H1 (cell line): ENCODE measurements at regions of chr10 and their contacts with region 1.

Region 1: DNA sequence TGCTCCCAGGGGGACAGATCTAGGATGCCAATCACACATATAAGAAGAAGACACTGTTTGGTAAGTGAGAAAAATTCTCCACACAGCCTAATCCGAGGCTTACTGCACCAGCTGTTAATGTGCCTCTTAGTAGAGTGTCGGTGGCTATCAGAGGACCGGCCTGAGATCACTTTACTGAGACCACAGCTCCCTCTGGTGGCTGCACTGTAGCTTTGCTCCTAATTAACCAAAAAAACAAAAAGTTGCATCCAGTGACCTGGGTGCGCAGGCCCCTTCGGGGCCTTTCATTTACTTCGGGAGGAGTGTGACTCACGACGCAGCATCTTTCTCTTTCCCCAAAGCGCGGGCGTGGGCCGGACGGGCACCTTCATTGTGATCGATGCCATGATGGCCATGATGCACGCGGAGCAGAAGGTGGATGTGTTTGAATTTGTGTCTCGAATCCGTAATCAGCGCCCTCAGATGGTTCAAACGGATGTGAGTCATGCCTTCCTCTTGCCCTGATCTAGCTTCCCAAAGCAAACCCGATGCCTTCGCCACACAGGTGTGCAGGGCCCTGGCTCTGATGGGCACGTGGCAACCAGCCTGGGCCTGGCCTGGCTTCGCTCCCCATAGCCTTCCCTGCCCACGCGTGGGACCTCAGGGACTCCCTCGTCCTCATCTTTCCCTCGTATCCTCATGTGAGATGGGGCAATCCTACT is 56.7 kb downstream of the MKI67 start:
- DNase-seq: peak; percentile 19 to 86
- H3K4me3 ChIP-seq: no peak overlapping the region
- H3K27ac ChIP-seq: no peak overlapping the region
- H3K4me1 ChIP-seq: peaks cover 0 to 3% (median 0%) of the 10 kb centered on the region in 4 experiments; a peak in 1 of 7 replicates
- H3K27me3 ChIP-seq: 0 out of 7 replicates have a peak, but pooled peaks cover 0 to 2% (median 0%) of the 10 kb centered on the region in 4 experiments
- CTCF ChIP-seq: peak; percentile 55 to 88 (median 74)
- EP300 ChIP-seq: 0 out of 3 replicates have a peak, but pooled peaks of 1 of the 2 experiments have one; percentile 16
- POLR2A ChIP-seq: no peak
- RAD21 ChIP-seq: peak; percentile 92 to 95

Region 2: DNA sequence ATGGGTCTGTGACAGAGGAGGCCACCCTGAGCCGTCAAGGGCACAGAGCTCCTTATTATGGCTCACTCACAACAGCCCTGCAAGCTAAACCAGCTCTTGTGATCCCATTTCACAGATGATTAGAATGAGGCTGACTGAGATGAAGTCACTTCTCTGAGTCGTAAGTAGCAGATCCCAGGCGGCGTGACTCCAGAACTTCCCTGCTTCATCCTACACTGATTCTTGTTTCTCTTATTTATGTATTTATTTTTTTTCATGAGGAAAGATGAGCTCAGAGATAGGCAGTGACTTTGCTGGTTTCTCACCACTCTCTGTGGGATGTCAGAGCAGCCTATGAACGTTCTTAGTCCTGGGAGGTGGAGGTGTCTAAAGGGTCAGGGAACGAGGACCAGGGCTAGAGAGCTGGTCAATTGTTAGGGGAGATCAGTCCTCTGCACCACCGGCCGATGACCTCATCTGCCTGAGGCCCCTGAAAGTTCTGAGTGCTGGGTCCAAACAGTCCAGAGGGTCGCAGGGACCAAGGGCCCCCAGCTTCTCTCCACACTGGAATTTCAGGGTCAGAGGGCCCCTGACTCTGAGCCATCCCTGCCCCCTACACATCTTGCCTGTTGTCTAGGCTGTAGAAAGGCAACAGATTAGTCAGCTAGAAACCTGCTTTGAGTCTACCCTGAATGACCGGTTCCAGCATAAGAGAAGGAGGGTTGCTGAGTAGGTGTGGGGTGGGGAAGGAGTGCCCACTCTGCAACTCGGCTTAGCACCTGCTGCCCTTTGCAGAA is 194.6 kb before region 1 on chr10:
- CTCF ChIA-PET with region 1: interaction called, 12 read pairs
- POLR2A ChIA-PET with region 1: no interaction called
- DNase-seq: no peak
- H3K4me3 ChIP-seq: no peak overlapping the region
- H3K27ac ChIP-seq: no peak overlapping the region
- H3K4me1 ChIP-seq: no peaks in the 10 kb centered on the region
- H3K27me3 ChIP-seq: no peaks in the 10 kb centered on the region; a peak in 1 of 7 replicates
- CTCF ChIP-seq: no peak
- EP300 ChIP-seq: no peak
- POLR2A ChIP-seq: no peak
- RAD21 ChIP-seq: no peak

Region 3: DNA sequence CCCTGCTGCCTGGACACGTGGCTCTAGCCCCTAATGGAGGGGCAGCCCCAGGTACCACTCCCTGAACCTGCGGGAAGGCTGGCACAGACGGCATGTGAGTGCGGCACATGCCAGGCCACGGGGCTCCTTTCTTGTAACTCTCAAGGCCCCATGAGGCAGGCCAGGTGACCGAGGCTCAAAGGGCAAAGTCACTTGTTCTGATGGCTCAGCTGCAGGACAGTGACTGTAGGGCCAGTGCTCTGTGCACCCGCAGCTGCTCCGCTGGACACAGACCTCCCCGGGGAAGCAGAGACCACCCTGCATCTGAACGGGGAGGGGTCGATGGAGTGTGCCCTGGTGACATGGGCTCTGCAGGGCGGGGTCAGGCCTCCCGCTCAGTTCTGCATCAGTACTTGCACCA is 107.3 kb before region 1 on chr10:
- CTCF ChIA-PET with region 1: no interaction called
- POLR2A ChIA-PET with region 1: no interaction called
- DNase-seq: no peak
- H3K4me3 ChIP-seq: no peak overlapping the region
- H3K27ac ChIP-seq: no peak overlapping the region
- H3K4me1 ChIP-seq: peaks cover 2 to 20% (median 7%) of the 10 kb centered on the region in 4 experiments
- H3K27me3 ChIP-seq: no peaks in the 10 kb centered on the region; a peak in 2 of 7 replicates
- CTCF ChIP-seq: no peak
- EP300 ChIP-seq: no peak
- POLR2A ChIP-seq: no peak
- RAD21 ChIP-seq: no peak

Region 4: DNA sequence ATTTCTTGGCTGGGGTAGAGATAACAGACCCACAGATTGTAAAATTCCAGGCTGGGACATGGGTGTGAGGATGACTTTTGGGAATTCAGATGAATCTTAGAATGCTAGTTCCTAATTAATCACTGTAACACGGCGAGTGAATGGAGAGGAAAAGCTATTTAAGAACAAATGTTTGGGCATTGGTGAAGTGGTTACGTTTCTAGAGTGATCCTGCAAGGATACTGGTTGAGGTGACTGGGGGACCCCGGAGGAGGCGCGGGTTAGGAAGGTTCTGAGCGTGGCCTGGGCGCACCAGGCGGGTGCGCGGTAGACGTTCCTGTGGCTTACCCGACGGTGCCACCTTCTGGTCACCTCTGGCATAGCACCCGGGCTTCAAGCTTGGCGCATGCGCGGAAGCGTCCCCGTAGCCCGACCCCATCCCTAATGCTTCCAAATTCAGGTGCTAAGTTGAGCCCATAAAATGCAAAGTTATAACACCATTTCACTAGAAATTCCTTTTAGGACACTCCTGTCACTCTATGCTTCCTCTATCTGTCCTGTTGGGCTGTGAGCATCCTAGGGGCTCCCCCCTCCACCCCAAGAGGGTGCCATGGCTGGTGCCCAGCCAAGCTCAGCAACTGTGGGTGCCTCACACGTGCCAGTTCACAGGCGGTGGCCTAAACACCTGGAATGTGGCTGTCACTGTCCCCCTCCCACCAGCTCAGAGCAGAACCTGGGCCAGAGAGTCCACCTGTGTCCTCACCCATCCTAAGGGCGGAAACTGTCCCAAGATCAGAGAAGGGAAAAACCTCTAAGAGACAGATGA is 58.1 kb before region 1 on chr10:
- CTCF ChIA-PET with region 1: interaction called, 18 read pairs
- POLR2A ChIA-PET with region 1: no interaction called
- DNase-seq: peak; percentile 47 to 98
- H3K4me3 ChIP-seq: no peak overlapping the region; a peak in 1 of 8 replicates
- H3K27ac ChIP-seq: no peak overlapping the region
- H3K4me1 ChIP-seq: peaks cover 0 to 4% (median 0%) of the 10 kb centered on the region in 4 experiments; a peak in 1 of 7 replicates
- H3K27me3 ChIP-seq: no peaks in the 10 kb centered on the region; a peak in 1 of 7 replicates
- CTCF ChIP-seq: peak; percentile 94 to 98 (median 98)
- EP300 ChIP-seq: no peak
- POLR2A ChIP-seq: no peak
- RAD21 ChIP-seq: peak; percentile 94 to 95

Region 5: GRCh38 chr10:128026614-128027300 is 42.7 kb before region 1 on chr10:
- CTCF ChIA-PET with region 1: interaction called, 28 read pairs
- POLR2A ChIA-PET with region 1: no interaction called
- DNase-seq: no peak
- H3K4me3 ChIP-seq: no peak overlapping the region
- H3K27ac ChIP-seq: no peak overlapping the region
- H3K4me1 ChIP-seq: no peaks in the 10 kb centered on the region; a peak in 1 of 7 replicates
- H3K27me3 ChIP-seq: no peaks in the 10 kb centered on the region
- CTCF ChIP-seq: no peak
- EP300 ChIP-seq: no peak
- POLR2A ChIP-seq: no peak
- RAD21 ChIP-seq: no peak

Region 6: DNA sequence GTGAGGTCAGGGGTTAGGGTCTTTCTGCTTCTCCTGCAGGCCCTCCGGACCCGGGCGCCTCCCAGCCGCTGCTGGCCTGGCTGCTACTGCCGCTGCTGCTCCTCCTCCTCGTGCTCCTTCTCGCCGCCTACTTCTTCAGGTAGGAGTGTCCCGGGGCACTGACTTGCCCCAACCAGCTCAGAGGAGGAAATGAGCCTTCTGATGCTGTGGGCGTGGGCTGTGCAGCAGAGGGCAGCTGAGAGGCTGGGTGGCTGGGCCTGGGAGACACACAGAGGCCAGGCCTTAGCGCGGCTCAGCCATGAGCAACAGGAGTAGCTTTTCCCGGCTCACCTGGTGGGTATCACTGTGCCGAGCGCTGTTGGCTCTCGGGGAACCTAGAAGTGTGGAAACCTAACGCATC is 22.1 kb before region 1 on chr10:
- CTCF ChIA-PET with region 1: interaction called, 24 read pairs
- POLR2A ChIA-PET with region 1: no interaction called
- DNase-seq: peak; percentile 15 to 71
- H3K4me3 ChIP-seq: no peak overlapping the region
- H3K27ac ChIP-seq: no peak overlapping the region
- H3K4me1 ChIP-seq: peaks cover 0 to 2% (median 0%) of the 10 kb centered on the region in 4 experiments; a peak in 2 of 7 replicates
- H3K27me3 ChIP-seq: no peaks in the 10 kb centered on the region
- CTCF ChIP-seq: no peak
- EP300 ChIP-seq: no peak; a peak in 1 of 3 replicates
- POLR2A ChIP-seq: peak in 1 of 2 experiments; percentile 40; a peak in 1 of 3 replicates
- RAD21 ChIP-seq: no peak

Region 7: GRCh38 chr10:128095027-128095752 is 25.7 kb after region 1 on chr10:
- CTCF ChIA-PET with region 1: interaction called, 14 read pairs
- POLR2A ChIA-PET with region 1: no interaction called
- DNase-seq: no peak
- H3K4me3 ChIP-seq: no peak overlapping the region
- H3K27ac ChIP-seq: no peak overlapping the region
- H3K4me1 ChIP-seq: 0 out of 7 replicates have a peak, but pooled peaks cover 0 to 3% (median under 1%) of the 10 kb centered on the region in 4 experiments
- H3K27me3 ChIP-seq: no peaks in the 10 kb centered on the region
- CTCF ChIP-seq: no peak
- EP300 ChIP-seq: no peak
- POLR2A ChIP-seq: no peak
- RAD21 ChIP-seq: no peak